B cell (primary cell): ENCODE measurements at regions of chr2 and their contacts with region 1.

Region 1: DNA sequence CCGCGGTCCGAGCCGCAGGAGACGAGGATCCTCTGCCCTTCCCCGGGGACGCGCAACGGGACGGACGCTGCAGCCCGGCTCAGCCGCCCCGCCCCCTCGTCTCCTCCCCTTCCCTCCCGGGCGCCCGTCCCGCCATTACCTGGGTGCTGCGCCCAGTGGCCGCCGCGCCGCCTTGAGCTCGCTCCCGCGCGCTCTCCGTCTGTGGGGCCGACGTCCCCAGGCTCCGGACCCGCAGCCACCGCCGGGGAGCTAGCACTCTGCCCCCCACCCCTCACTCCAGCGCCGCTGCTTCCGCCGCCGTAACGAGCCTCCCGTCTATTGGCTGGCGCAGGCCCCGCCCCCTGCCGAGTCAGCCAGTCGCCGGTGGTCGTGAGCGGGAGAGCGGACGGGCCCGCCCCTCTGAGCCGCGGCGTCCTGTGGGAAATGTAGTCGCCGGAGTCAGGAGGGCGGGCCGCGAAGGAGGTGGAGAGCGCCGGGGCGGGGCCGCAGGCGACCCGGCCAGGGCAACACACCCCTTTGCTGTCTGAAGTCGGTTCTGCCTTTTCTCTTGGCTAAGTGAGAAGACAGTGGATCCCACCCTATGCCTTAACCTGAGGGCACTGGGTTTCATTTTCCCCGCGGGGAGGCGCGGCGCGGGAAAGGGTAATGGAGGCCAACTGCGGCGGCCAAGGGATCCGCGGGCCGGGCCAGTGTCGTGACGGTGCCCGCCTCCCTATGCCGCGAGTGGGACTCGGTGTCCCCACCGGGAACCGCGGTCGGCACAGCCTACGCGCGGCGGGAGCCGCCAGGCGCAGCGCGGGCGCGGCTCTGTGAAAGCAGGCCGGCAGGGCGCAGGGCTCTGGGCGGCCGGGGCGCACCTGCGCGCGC is at the start of gene SAP130:
- DNase-seq: peak; percentile 98
- ATAC-seq: peak; percentile 77
- H3K4me3 ChIP-seq: peak within 1 kb of the TSS; percentile 38 to 93 (median 87)
- H3K4me3 Mint-ChIP-seq: peak within 1 kb of the TSS; percentile 97
- H3K27ac ChIP-seq: peak within 1 kb of the TSS; percentile 68 to 81
- H3K27ac Mint-ChIP-seq: peak within 1 kb of the TSS; percentile 97
- H3K4me1 ChIP-seq: peaks cover 13 to 14% of the 10 kb centered on the region in 2 donors
- H3K4me1 Mint-ChIP-seq: peaks cover 20% of the 10 kb centered on the region
- H3K27me3 ChIP-seq: no peaks in the 10 kb centered on the region
- H3K27me3 Mint-ChIP-seq: peaks cover 5% of the 10 kb centered on the region
- CTCF ChIP-seq: no peak
- total RNA-seq, gene SAP130: 35.2 and 40.1 TPM in 2 replicates

Region 2: GRCh38 chr2:127293748-127294562 is 734.1 kb before region 1 on chr2 and contains the start of gene ERCC3:
- CTCF ChIA-PET with region 1: no interaction called
- POLR2A ChIA-PET with region 1: no interaction called
- intact Hi-C with region 1: loop called (anchors 5 kb)
- DNase-seq: peak; percentile 86
- ATAC-seq: peak; percentile 96
- H3K4me3 ChIP-seq: peak within 1 kb of the TSS; percentile 82 to 97 (median 88)
- H3K4me3 Mint-ChIP-seq: peak within 1 kb of the TSS; percentile 100
- H3K27ac ChIP-seq: peak within 1 kb of the TSS; percentile 46 to 84
- H3K27ac Mint-ChIP-seq: peak within 1 kb of the TSS; percentile 95
- H3K4me1 ChIP-seq: peaks cover 5 to 22% of the 10 kb centered on the region in 2 donors
- H3K4me1 Mint-ChIP-seq: peaks cover 31% of the 10 kb centered on the region
- H3K27me3 ChIP-seq: no peaks in the 10 kb centered on the region
- H3K27me3 Mint-ChIP-seq: no peaks in the 10 kb centered on the region
- CTCF ChIP-seq: no peak
- total RNA-seq, gene ERCC3: 74.8 and 79.3 TPM in 2 replicates

Region 3: DNA sequence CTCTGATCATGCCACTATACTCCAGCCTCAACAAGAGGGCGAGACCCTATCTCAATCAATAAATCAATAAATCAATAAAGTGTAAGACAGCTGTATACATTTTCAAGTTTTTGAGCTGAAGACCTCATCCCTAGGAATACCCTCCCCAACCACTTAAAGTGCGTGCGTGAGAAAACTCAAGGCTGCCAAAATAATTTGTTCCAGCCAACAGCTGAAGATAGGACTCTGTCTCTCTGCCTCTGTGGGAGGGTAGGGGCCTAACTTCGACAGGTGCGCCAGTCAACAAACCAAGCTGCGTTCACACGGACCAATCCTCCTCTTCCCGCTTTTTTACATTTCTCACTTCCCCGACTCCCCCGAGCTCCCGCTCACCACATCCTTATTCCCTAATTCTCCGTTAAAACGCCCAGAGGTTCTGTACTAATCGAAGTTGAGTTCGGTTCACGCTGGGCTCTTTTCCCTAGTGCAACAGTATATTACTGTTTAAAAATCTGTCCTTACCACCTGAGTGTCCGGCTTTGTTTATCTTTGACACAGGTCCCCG is 170.7 kb before region 1 on chr2:
- CTCF ChIA-PET with region 1: no interaction called
- POLR2A ChIA-PET with region 1: no interaction called
- intact Hi-C with region 1: loop called (anchors 1 kb)
- DNase-seq: no peak
- ATAC-seq: no peak
- H3K4me3 ChIP-seq: peak overlapping the region; percentile 68 to 87 (median 80)
- H3K4me3 Mint-ChIP-seq: peak overlapping the region; percentile 88
- H3K27ac ChIP-seq: peak overlapping the region; percentile 41 to 85
- H3K27ac Mint-ChIP-seq: peak overlapping the region; percentile 57
- H3K4me1 ChIP-seq: peaks cover 16 to 36% of the 10 kb centered on the region in 2 donors
- H3K4me1 Mint-ChIP-seq: peaks cover 46% of the 10 kb centered on the region
- H3K27me3 ChIP-seq: no peaks in the 10 kb centered on the region
- H3K27me3 Mint-ChIP-seq: no peaks in the 10 kb centered on the region
- CTCF ChIP-seq: no peak

Region 4: DNA sequence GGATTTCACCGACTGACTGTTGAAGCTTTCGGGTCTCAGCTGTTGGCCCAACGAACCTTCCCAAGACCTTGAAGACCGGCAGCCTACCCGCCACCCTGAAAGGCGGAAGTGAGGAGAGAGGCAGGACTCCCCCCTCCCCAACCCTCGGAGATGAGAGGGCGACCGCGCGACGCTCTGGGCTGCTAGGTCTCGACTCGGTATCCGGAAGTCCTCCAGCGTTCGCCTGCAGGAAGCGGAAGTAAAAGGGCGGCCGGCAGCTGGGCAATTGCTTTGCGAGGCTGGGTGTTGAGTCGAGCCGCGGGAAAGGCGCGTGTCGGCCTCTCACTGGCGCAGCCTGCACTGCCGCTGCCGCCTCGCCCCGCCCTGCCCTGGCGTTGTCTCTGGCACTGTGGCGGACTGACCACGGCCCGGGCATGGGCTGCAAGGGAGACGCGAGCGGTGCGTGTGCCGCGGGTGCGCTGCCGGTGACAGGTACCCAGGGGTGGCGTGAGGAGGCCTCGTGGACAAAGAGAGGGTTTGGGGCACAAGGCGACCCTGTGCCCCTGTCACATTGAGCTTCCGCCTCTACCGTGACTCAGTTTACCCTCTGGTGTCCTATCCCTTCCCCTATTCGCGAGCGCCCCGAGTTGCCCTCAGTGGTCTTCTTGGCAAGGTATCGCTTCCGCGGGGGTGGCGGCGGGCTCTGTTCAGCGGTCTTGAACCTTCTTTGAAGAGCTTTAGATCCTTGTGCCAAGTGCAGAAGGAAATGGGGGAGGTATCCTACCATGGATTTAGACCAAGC is 63.1 kb after region 1 on chr2 and contains the start of gene UGGT1:
- CTCF ChIA-PET with region 1: interaction called, 3 read pairs
- POLR2A ChIA-PET with region 1: interaction called, 13 read pairs
- intact Hi-C with region 1: loop called (anchors 1 kb)
- DNase-seq: peak; percentile 98
- ATAC-seq: peak; percentile 97
- H3K4me3 ChIP-seq: peak within 1 kb of the TSS; percentile 73 to 93 (median 79)
- H3K4me3 Mint-ChIP-seq: peak within 1 kb of the TSS; percentile 92
- H3K27ac ChIP-seq: peak within 1 kb of the TSS; percentile 57 to 78
- H3K27ac Mint-ChIP-seq: peak within 1 kb of the TSS; percentile 92
- H3K4me1 ChIP-seq: peaks cover 12 to 18% of the 10 kb centered on the region in 2 donors
- H3K4me1 Mint-ChIP-seq: peaks cover 42% of the 10 kb centered on the region
- H3K27me3 ChIP-seq: no peaks in the 10 kb centered on the region
- H3K27me3 Mint-ChIP-seq: no peaks in the 10 kb centered on the region
- CTCF ChIP-seq: no peak
- total RNA-seq, gene UGGT1: 42.1 and 44.1 TPM in 2 replicates